Body of pancreas (tissue), 4 donors: ENCODE measurements at regions of chr13 and their contacts with region 1.

Region 1: GRCh38 chr13:40519637-40520036 is 146.8 kb downstream of the FOXO1 start:
- DNase-seq: peak; percentile 45 to 62 (median 49)
- ATAC-seq: peak; percentile 78
- H3K4me3 ChIP-seq: no peak overlapping the region
- H3K27ac ChIP-seq: peak overlapping the region in 2 of 4 donors; percentile 26 to 49
- H3K4me1 ChIP-seq: peaks cover 22% of the 10 kb centered on the region
- H3K27me3 ChIP-seq: no peaks in the 10 kb centered on the region
- CTCF ChIP-seq: peak in 1 of 7 experiments; percentile 2
- POLR2A ChIP-seq: no peak

Region 2: GRCh38 chr13:40082639-40083038 is 437.0 kb before region 1 on chr13:
- intact Hi-C with region 1: loop called (anchors 10 kb)
- DNase-seq: peak in 3 of 4 donors; percentile 34 to 47 (median 38)
- ATAC-seq: peak; percentile 80
- H3K4me3 ChIP-seq: no peak overlapping the region
- H3K27ac ChIP-seq: peak overlapping the region in 2 of 4 donors; percentile 37 to 40
- H3K4me1 ChIP-seq: peaks cover 15% of the 10 kb centered on the region
- H3K27me3 ChIP-seq: no peaks in the 10 kb centered on the region
- CTCF ChIP-seq: peak in 1 of 7 experiments; percentile 26
- POLR2A ChIP-seq: no peak